Cardiac septum (tissue), 1 donor: ENCODE measurements at regions of chr5 and their contacts with region 1.

Region 1: GRCh38 chr5:142324871-142325724 is at the start of gene SPRY4:
- DNase-seq: peak; percentile 93
- total RNA-seq, gene SPRY4: 20.6 TPM

Region 2: DNA sequence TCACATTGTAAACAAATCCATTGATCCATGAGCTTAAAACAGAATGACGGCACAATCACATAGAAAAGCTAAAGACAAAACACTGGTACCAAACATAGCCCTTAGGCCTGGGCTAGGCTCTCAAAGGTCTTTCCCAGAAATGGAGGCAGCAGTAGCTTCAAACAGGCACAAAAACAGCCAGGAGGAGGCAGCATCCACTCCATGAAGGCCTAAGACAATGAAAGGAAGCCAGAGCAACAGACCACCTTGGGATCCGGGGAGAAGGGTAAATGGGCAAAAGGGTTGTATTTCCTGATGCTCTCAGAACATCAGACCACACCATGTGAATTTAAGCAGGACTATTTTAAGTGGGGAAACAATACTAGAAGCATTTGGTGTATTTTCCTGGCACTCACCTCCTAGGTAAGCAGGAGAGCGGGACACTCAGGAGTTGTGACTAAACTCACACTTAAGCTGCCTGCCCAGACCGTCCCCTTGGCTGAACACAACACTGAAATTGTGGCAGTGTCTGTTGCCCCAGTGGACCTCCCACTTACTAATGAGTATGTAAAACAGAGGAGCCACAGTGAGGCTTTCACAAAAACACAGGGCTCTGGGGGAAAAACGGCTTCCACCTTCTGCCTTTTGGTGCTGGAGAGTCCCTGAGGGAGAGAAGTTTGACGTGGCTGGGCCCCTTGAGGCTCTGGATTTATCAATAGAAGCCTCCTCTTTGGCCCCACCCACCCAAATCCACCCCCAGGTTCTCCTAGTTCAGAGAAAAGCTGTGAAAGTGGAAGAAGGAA is 324.2 kb before region 1 on chr5:
- intact Hi-C with region 1: no loop called
- DNase-seq: no peak

Region 3: DNA sequence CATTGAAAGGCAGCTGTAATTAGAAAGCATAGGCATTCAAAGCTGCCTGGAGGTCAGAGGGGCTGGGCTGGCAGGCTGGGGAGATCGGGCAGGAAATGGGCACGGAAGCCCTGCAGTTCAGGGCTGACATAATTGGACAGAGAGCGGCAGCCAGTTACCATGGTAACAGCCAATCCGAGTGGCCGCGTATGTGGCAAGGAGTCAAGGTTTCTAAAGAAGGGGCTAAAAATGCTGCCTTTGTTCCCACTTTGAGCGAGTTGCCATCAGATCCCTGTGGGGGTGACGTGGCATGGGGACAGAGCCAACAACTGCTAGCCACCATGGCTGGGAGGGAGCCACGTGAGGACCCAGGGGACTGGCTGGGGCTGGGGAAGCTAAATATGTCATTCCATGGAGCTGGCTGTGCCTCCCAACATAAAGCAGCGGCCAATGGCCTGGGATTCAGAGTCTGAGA is 261.2 kb before region 1 on chr5:
- intact Hi-C with region 1: no loop called
- DNase-seq: peak; percentile 84

Region 4: DNA sequence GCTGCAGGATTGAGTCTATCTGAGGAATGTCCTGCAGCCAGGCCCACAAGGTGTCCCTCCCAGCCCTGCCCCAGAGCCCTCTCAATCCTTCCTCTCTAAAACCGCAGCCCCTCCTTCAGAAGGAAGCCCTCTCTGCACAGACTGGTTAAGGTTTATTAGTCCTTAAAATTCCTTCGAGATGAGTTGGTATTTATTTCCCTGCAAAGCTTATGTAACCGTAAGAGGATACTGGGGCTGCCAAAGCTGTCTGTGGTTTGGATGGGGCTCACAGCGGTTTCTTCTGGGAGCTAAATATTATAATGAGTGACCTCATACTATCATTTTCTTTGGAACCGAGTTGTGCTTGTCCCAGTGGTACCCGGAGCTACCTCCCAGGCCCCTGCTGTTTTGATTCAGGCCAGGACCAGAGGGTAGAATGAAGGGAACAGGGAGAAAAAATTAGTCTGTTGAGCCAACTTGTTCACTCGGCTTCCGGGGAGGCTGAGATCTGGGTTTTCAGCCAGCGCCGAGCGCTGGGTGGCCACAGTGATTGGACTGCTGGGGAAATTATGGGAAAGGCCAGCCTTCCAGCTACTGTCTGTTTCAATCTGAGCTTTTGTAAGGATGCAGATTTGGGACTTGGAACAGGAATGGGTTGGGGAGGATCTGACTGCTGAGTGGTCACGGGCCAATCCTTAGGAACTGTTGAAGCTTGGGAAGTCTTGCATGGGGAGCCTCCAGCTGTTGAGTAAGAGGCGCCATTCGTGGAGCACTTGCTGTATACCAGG is 109.0 kb before region 1 on chr5:
- intact Hi-C with region 1: loop called (anchors 5 kb)
- DNase-seq: no peak

Region 5: GRCh38 chr5:142356716-142357473 is 31.8 kb after region 1 on chr5:
- intact Hi-C with region 1: loop called (anchors 1 kb)
- DNase-seq: peak; percentile 94

Region 6: DNA sequence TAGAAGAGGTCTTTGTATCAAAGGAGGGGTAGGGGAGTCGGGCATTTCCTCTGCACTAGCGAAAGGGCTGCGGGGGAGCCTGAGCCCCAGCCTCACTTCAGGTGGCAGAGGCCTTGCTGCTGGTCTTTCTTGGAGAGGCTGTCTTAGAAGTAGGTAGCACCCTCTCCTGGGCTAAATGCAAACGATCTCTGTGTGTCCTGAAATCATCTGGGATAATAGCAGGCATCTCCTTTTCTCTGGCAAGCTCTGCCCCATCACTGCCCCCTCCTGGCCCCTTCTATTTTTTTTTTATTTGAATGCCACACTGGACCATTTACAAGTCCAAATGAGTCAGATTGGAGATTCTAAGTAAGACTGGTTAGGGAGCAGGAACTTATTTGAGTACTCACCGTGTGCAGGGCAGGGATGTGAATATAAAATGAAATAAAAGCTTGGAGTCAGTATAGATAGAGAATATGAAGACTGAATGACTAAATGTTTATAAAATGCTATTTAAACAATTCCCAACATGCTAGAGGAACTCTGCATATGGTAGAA is 223.7 kb after region 1 on chr5:
- intact Hi-C with region 1: loop called (anchors 1 kb)
- DNase-seq: no peak